Natural killer cell (primary cell): ENCODE measurements at regions of chr18 and their contacts with region 1.

Region 1: GRCh38 chr18:62982600-62983251 is 267.4 kb downstream of the PHLPP1 start:
- DNase-seq: peak in 1 of 2 donors; percentile 80
- ATAC-seq: peak in 2 of 3 donors; percentile 68 to 74
- H3K4me3 ChIP-seq: no peak overlapping the region
- H3K4me3 Mint-ChIP-seq: peak overlapping the region; percentile 64
- H3K27ac ChIP-seq: no peak overlapping the region
- H3K27ac Mint-ChIP-seq: no peak overlapping the region
- H3K4me1 ChIP-seq: peaks cover 5% of the 10 kb centered on the region
- H3K4me1 Mint-ChIP-seq: peaks cover 7 to 8% of the 10 kb centered on the region in 2 donors
- H3K27me3 ChIP-seq: no peaks in the 10 kb centered on the region
- H3K27me3 Mint-ChIP-seq: no peaks in the 10 kb centered on the region
- CTCF ChIP-seq: peak; percentile 72

Region 2: GRCh38 chr18:62637807-62638687 is 344.7 kb before region 1 on chr18:
- intact Hi-C with region 1: loop called (anchors 1 kb)
- DNase-seq: peak; percentile 34 to 70
- ATAC-seq: peak; percentile 57 to 78 (median 62)
- H3K4me3 ChIP-seq: no peak overlapping the region
- H3K4me3 Mint-ChIP-seq: no peak overlapping the region
- H3K27ac ChIP-seq: no peak overlapping the region
- H3K27ac Mint-ChIP-seq: no peak overlapping the region
- H3K4me1 ChIP-seq: no peaks in the 10 kb centered on the region
- H3K4me1 Mint-ChIP-seq: no peaks in the 10 kb centered on the region
- H3K27me3 ChIP-seq: no peaks in the 10 kb centered on the region
- H3K27me3 Mint-ChIP-seq: peaks cover 18 to 30% of the 10 kb centered on the region in 2 donors
- CTCF ChIP-seq: peak; percentile 65

Region 3: DNA sequence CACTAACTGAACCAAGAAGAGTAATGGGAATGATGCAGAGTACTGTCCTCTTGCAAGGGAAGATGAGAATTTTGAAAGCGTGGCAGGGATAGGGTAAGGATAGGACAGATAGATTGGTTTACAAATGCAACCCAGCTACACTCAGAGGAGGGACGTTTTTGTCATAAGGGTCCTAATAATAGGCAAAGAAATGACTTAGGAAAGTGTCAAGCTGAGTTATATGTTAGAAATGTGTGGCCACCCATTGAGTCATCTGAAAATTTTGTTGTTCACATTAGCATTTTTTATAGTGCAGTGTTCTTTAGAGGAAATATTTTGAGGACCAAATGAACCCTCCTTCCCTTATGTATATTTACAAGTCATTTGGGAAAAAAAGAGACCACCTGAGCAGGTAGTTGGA is 129.9 kb before region 1 on chr18:
- intact Hi-C with region 1: no loop called
- DNase-seq: no peak
- ATAC-seq: no peak
- H3K4me3 ChIP-seq: no peak overlapping the region
- H3K4me3 Mint-ChIP-seq: no peak overlapping the region
- H3K27ac ChIP-seq: no peak overlapping the region
- H3K27ac Mint-ChIP-seq: no peak overlapping the region
- H3K4me1 ChIP-seq: no peaks in the 10 kb centered on the region
- H3K4me1 Mint-ChIP-seq: no peaks in the 10 kb centered on the region
- H3K27me3 ChIP-seq: no peaks in the 10 kb centered on the region
- H3K27me3 Mint-ChIP-seq: no peaks in the 10 kb centered on the region
- CTCF ChIP-seq: no peak